HepG2 (cell line): ENCODE measurements at regions of chr14 and their contacts with region 1.

Region 1: DNA sequence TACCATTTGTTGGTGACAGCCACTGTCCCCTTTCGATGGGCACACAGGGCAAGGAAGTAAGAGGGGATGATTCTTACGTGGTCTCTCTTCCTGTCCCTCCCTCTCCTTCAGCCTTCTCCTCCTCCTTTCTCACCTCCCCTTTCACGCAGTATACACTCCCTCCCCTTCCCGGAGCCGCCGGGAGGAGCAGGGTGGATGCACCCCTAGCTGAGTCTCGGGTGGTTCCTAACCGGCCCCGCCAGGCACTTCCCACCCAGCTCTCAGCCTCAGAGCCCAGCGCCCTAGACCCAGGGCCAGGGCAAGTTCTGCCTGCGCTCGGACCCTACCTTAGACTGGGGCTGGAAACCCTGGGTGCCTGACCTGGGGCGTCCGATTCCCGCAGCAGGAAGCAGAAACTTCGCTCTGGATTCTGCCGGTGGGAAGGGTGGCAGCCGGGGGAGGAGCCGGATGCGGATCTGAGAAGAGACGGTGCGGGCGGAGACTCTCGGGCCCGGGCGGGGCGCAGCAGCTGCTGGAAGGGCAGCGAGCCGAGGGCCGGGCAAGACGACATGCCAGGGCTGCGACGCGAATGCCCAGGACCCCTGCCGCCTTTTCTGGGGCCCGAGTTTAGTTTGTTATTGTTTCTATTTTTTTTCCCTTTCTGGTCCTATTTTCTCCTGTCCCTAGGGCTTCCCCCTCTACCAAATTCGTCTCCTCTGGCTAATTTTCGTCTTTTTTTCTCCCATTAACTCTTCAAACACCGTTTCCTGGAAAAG is at the start of gene TEP1:
- DNase-seq: peak; percentile 62
- ATAC-seq: peak; percentile 93
- H3K4me3 ChIP-seq: peak within 1 kb of the TSS; percentile 81 to 93 (median 92)
- H3K27ac ChIP-seq: peak within 1 kb of the TSS; percentile 63
- H3K4me1 ChIP-seq: peaks cover 47% of the 10 kb centered on the region
- H3K27me3 ChIP-seq: no peaks in the 10 kb centered on the region; a peak in 2 of 5 replicates
- CTCF ChIP-seq: peak; percentile 35
- EP300 ChIP-seq: 0 out of 4 replicates have a peak, but pooled peaks of 1 of the 2 experiments have one; percentile 3
- POLR2A ChIP-seq: peak; percentile 31 to 84; a peak in 3 of 4 replicates
- RAD21 ChIP-seq: peak; percentile 32; the same call in 1 of the 2 replicates
- total RNA-seq, gene TEP1: 9.5 and 12.8 TPM in 2 replicates

Region 2: DNA sequence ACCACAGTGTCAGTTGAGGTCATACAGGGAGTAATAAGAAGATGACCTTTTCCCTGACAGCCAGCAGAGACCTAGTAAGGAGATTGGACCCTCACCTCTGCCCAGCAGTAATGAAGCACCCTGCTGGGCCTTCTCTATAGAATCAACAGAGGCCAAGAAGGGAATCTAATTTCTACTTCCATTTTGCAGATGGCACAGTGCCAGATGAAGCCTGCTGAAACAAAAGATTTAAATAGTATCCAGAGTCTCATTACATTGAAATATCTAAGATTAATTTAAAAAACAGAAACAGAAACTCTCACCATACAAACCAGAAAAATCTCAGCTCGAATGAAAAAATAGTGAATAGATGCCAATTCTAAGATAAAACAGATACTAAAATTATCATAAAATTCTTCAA is 405.7 kb before region 1 on chr14:
- CTCF ChIA-PET with region 1: no interaction called
- POLR2A ChIA-PET with region 1: no interaction called
- in situ Hi-C with region 1: no loop called
- intact Hi-C with region 1: no loop called
- DNase-seq: no peak
- ATAC-seq: no peak
- H3K4me3 ChIP-seq: no peak overlapping the region
- H3K27ac ChIP-seq: no peak overlapping the region
- H3K4me1 ChIP-seq: no peaks in the 10 kb centered on the region
- H3K27me3 ChIP-seq: no peaks in the 10 kb centered on the region; a peak in 1 of 5 replicates
- CTCF ChIP-seq: no peak
- EP300 ChIP-seq: no peak
- POLR2A ChIP-seq: no peak
- RAD21 ChIP-seq: no peak

Region 3: GRCh38 chr14:20343092-20343861 is 69.9 kb before region 1 on chr14 and contains the start of gene PARP2:
- CTCF ChIA-PET with region 1: no interaction called
- POLR2A ChIA-PET with region 1: interaction called, 53 read pairs
- in situ Hi-C with region 1: no loop called
- intact Hi-C with region 1: loop called (anchors 1 kb)
- DNase-seq: peak; percentile 100
- ATAC-seq: peak; percentile 99
- H3K4me3 ChIP-seq: peak within 1 kb of the TSS; percentile 82 to 88 (median 86)
- H3K27ac ChIP-seq: peak within 1 kb of the TSS; percentile 89
- H3K4me1 ChIP-seq: peaks cover 24% of the 10 kb centered on the region
- H3K27me3 ChIP-seq: no peaks in the 10 kb centered on the region; a peak in 1 of 5 replicates
- CTCF ChIP-seq: peak; percentile 25; the same call in 1 of the 2 replicates
- EP300 ChIP-seq: no peak; a peak in 1 of 4 replicates
- POLR2A ChIP-seq: peak; percentile 82 to 99
- RAD21 ChIP-seq: peak; percentile 42; the same call in 1 of the 2 replicates
- total RNA-seq, gene PARP2: 37.3 and 39.1 TPM in 2 replicates

Region 4: GRCh38 chr14:20400965-20401593 is 12.1 kb before region 1 on chr14:
- CTCF ChIA-PET with region 1: no interaction called
- POLR2A ChIA-PET with region 1: interaction called, 10 read pairs
- in situ Hi-C with region 1: no loop called
- intact Hi-C with region 1: no loop called
- DNase-seq: peak; percentile 54
- ATAC-seq: no peak
- H3K4me3 ChIP-seq: no peak overlapping the region
- H3K27ac ChIP-seq: no peak overlapping the region
- H3K4me1 ChIP-seq: no peaks in the 10 kb centered on the region; the same call in 1 of the 2 replicates
- H3K27me3 ChIP-seq: no peaks in the 10 kb centered on the region
- CTCF ChIP-seq: no peak
- EP300 ChIP-seq: peak in 1 of 2 experiments; percentile 40; a peak in 1 of 4 replicates
- POLR2A ChIP-seq: no peak
- RAD21 ChIP-seq: no peak

Region 5: DNA sequence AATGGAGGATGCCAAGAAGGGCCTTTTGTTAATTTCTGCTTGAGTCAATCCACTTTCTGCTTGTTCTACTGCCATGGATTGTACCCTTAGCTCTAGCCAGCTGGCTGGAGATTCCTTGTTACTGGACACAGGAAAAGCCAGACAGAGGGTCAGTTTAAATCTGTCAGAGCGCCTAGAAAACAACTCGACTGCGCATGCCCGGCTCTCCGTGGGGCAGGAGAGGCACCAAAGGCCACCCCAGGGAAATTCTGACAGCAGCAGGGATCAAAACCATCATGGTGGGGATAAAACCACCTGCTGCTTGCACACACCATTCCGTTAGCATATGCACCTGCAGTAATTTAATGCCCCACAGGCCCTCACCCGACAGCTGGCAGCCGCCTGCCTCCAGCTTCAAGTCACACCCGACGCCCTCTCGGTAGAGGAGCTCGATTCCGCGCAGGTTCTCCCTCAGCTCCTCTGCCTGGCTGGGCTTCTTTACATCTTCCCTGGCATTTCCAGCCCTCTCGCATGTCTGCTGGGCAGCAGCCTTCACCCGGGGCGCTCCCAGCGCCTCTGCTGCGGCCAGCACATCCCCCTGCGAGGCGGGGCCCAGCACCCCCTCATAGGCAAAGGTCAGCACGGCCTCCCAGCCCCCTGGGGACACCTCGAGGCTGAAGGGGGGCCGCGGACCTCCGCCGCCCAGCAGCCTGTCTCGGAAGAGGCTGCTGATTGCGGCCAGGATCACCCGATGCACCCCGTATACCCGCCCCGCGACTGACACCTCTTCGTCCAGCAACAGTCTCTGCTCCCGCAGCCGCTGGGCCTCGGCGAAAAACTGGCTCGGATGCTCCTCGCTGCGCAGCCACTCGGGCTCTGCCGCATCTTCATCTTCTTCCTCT is 21.7 kb after region 1 on chr14:
- CTCF ChIA-PET with region 1: no interaction called
- POLR2A ChIA-PET with region 1: interaction called, 37 read pairs
- in situ Hi-C with region 1: no loop called
- intact Hi-C with region 1: no loop called
- DNase-seq: no peak
- ATAC-seq: no peak
- H3K4me3 ChIP-seq: no peak overlapping the region
- H3K27ac ChIP-seq: no peak overlapping the region
- H3K4me1 ChIP-seq: peaks cover 19% of the 10 kb centered on the region
- H3K27me3 ChIP-seq: peaks cover 1 to 9% of the 10 kb centered on the region in 2 experiments; a peak in 3 of 5 replicates
- CTCF ChIP-seq: no peak
- EP300 ChIP-seq: no peak
- POLR2A ChIP-seq: no peak
- RAD21 ChIP-seq: no peak

Region 6: GRCh38 chr14:20461274-20462001 is 48.2 kb after region 1 on chr14 and contains the start of gene PIP4P1:
- CTCF ChIA-PET with region 1: no interaction called
- POLR2A ChIA-PET with region 1: interaction called, 59 read pairs
- in situ Hi-C with region 1: loop called (anchors 5 kb)
- intact Hi-C with region 1: no loop called
- DNase-seq: peak; percentile 100
- ATAC-seq: peak; percentile 97
- H3K4me3 ChIP-seq: peak within 1 kb of the TSS; percentile 67 to 89 (median 78)
- H3K27ac ChIP-seq: peak within 1 kb of the TSS; percentile 80
- H3K4me1 ChIP-seq: peaks cover 56% of the 10 kb centered on the region
- H3K27me3 ChIP-seq: no peaks in the 10 kb centered on the region; a peak in 1 of 5 replicates
- CTCF ChIP-seq: no peak; the same call in 1 of the 2 replicates
- EP300 ChIP-seq: peak; percentile 25 to 56; a peak in 3 of 4 replicates
- POLR2A ChIP-seq: peak in 1 of 2 experiments; percentile 85; a peak in 3 of 4 replicates
- RAD21 ChIP-seq: peak; percentile 51
- total RNA-seq, gene PIP4P1: 31.9 and 33.4 TPM in 2 replicates

Region 7: DNA sequence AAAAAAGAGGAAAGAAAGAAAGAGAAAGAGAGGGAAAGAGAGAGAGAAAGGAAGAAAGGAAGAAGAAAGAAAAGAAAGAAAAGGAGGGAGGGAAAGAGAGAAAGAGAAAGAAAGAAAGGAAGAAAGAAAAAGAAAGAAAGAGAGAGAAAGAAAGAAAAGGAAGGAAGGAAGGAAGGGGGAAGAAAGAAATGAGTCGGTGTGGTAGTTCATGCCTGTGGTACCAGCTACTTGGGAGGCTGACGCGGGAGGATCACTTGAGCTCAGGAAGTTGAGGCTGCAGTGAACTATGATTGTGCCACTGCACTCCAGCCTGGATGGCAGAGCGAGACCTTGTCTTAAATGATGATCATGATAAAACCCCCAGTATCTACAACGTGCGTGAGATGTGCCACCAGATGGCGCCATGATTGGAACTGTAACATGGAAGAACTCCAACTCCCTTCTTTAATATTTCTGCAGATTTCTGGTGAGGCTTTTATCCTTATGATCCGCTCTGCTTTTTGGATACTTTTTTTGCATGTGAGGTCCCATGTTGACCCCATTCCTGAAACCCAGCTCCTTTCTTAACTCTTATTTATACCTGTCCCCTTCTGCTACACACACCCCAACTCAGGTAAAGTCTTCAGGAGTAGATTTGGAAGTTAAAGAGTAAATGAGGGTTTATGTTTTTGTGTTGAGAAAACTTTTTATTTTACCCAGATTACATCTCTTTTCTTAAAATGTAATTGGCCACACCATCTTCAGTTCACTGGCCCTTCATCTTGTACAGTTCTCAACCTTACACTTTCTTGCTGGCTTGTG is 117.7 kb after region 1 on chr14:
- CTCF ChIA-PET with region 1: no interaction called
- POLR2A ChIA-PET with region 1: no interaction called
- in situ Hi-C with region 1: no loop called
- intact Hi-C with region 1: loop called (anchors 5 kb)
- DNase-seq: peak; percentile 75
- ATAC-seq: peak; percentile 94
- H3K4me3 ChIP-seq: no peak overlapping the region
- H3K27ac ChIP-seq: no peak overlapping the region
- H3K4me1 ChIP-seq: peaks cover 9% of the 10 kb centered on the region; the same call in 1 of the 2 replicates
- H3K27me3 ChIP-seq: no peaks in the 10 kb centered on the region; a peak in 2 of 5 replicates
- CTCF ChIP-seq: peak; percentile 83
- EP300 ChIP-seq: no peak
- POLR2A ChIP-seq: no peak
- RAD21 ChIP-seq: peak; percentile 54; the same call in 1 of the 2 replicates

Region 8: GRCh38 chr14:20682435-20683124 is 269.4 kb after region 1 on chr14:
- CTCF ChIA-PET with region 1: no interaction called
- POLR2A ChIA-PET with region 1: interaction called, 7 read pairs
- in situ Hi-C with region 1: no loop called
- intact Hi-C with region 1: loop called (anchors 5 kb)
- DNase-seq: peak; percentile 94
- ATAC-seq: peak; percentile 74
- H3K4me3 ChIP-seq: peak overlapping the region; percentile 83 to 89 (median 89)
- H3K27ac ChIP-seq: peak overlapping the region; percentile 97
- H3K4me1 ChIP-seq: peaks cover 22% of the 10 kb centered on the region
- H3K27me3 ChIP-seq: peaks cover 0 to 5% of the 10 kb centered on the region in 2 experiments; a peak in 1 of 5 replicates
- CTCF ChIP-seq: 0 out of 2 replicates have a peak, but pooled peaks have one; percentile 8
- EP300 ChIP-seq: no peak
- POLR2A ChIP-seq: peak; percentile 82 to 84
- RAD21 ChIP-seq: 0 out of 2 replicates have a peak, but pooled peaks have one; percentile 5